Activated CD4-positive, alpha-beta memory T cell treated with anti-CD3 and anti-CD28 coated beads for 36 hours (primary cell): ENCODE measurements at regions of chr14 and their contacts with region 1.

Region 1: DNA sequence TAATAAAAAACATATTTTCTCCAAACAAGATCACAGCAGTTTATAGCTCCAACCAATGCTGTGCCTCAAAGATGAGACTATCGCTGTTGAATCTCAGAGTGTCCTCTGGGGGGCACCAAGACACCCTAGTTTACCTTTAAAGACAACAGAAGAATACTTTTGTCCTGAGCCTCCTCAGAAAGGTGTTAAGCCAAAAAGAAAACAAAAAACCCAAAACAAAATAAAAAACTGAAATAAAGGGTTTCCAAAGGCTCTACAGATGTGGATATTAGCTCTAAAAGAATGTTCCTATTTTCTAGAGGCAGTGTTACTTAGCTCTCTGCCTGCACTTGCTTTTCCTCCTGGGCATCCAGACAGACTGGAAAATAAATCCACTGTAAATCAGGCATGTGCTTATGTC is 86.9 kb upstream of the TTC7B start:
- DNase-seq: peak; percentile 63
- H3K4me3 Mint-ChIP-seq: no peak overlapping the region
- H3K27ac Mint-ChIP-seq: no peak overlapping the region
- H3K4me1 Mint-ChIP-seq: peaks cover 26% of the 10 kb centered on the region
- H3K27me3 Mint-ChIP-seq: no peaks in the 10 kb centered on the region

Region 2: GRCh38 chr14:90827916-90828610 is 75.0 kb before region 1 on chr14:
- CTCF ChIA-PET with region 1: no interaction called
- POLR2A ChIA-PET with region 1: no interaction called
- intact Hi-C with region 1: loop called (anchors 5 kb)
- DNase-seq: peak; percentile 96
- H3K4me3 Mint-ChIP-seq: peak overlapping the region; percentile 80
- H3K27ac Mint-ChIP-seq: peak overlapping the region; percentile 88
- H3K4me1 Mint-ChIP-seq: peaks cover 21% of the 10 kb centered on the region
- H3K27me3 Mint-ChIP-seq: no peaks in the 10 kb centered on the region

Region 3: GRCh38 chr14:91021991-91022621 is 119.0 kb after region 1 on chr14:
- CTCF ChIA-PET with region 1: interaction called, 5 read pairs
- POLR2A ChIA-PET with region 1: no interaction called
- intact Hi-C with region 1: loop called (anchors 5 kb)
- DNase-seq: no peak
- H3K4me3 Mint-ChIP-seq: peak overlapping the region; percentile 54
- H3K27ac Mint-ChIP-seq: peak overlapping the region; percentile 86
- H3K4me1 Mint-ChIP-seq: peaks cover 65% of the 10 kb centered on the region
- H3K27me3 Mint-ChIP-seq: no peaks in the 10 kb centered on the region

Region 4: DNA sequence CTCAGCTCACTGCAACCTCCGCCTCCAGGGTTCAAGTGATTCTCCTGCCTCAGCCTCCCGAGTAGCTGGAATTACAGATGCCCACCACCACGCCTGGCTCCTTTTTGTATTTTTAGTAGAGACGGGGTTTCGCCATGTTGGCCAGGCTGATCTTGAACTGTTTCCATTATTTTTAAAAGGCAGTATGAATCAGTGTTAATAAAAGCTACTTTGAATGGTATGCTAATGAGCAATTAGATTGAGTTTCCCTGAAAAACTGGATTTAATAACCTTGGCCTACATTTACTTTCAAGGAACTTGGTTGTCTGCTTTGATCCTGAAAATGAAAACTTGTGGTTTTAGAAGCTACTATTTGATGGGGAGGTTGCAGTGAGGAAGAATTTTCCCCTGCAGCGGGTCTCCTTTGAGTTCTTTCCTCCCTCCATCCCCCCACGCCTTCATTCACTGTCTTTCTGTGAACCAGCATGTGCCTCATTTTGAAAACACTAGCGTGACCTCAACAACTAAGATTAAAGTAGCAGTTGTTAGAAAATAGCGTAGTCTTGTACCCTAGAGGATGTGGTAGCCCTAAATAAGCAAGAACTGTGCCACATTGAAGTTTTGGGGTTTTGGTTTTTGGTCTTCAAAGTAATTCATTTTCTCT is 175.1 kb after region 1 on chr14:
- CTCF ChIA-PET with region 1: interaction called, 10 read pairs
- POLR2A ChIA-PET with region 1: no interaction called
- intact Hi-C with region 1: no loop called
- DNase-seq: peak; percentile 76
- H3K4me3 Mint-ChIP-seq: peak overlapping the region; percentile 13
- H3K27ac Mint-ChIP-seq: peak overlapping the region; percentile 87
- H3K4me1 Mint-ChIP-seq: peaks cover 30% of the 10 kb centered on the region
- H3K27me3 Mint-ChIP-seq: no peaks in the 10 kb centered on the region

Region 5: GRCh38 chr14:91114079-91115065 is 211.3 kb after region 1 on chr14:
- CTCF ChIA-PET with region 1: interaction called, 20 read pairs
- POLR2A ChIA-PET with region 1: interaction called, 4 read pairs
- intact Hi-C with region 1: loop called (anchors 2 kb)
- DNase-seq: peak; percentile 81
- H3K4me3 Mint-ChIP-seq: peak overlapping the region; percentile 83
- H3K27ac Mint-ChIP-seq: peak overlapping the region; percentile 94
- H3K4me1 Mint-ChIP-seq: peaks cover 66% of the 10 kb centered on the region
- H3K27me3 Mint-ChIP-seq: no peaks in the 10 kb centered on the region

Region 6: DNA sequence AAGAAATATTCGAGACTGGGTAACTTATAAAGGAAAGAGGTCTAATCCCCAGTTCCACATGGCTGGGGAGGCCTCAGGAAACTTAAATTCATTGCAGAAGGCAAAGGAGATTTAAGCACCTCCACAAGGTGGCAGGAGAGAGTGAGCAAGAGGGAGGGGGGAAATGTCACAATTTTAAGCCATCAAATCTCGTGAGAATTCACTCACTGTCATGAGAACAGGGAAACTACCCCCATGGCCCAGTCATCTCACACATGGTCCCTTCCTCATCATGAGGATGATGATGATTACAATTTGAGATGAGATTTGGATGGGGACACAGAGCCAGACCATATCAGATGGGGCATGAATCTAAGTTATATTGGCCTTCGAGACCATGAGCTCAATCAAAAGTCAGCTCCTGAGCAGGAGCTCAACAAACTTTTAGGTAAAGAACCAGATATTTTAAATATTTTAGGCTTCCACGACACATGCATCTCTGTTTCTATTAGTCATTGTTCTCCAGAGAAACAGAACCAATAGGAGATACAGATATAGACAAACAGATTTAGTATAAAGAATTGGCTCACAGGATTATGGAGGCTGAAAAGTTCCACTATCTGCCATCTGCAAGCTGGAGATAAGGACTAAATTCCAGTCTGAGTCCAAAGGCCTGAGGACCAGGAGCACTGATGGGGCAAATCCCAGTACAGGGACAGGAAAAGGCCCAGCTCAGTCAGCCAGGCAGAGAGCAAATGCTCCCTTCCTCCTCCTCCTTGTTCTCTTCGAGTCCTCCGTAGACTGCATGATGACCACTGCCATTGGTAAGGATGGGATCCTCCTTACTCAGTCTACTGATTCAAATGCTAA is 235.6 kb after region 1 on chr14:
- CTCF ChIA-PET with region 1: interaction called, 17 read pairs
- POLR2A ChIA-PET with region 1: no interaction called
- intact Hi-C with region 1: loop called (anchors 1 kb)
- DNase-seq: peak; percentile 74
- H3K4me3 Mint-ChIP-seq: no peak overlapping the region
- H3K27ac Mint-ChIP-seq: peak overlapping the region; percentile 77
- H3K4me1 Mint-ChIP-seq: peaks cover 51% of the 10 kb centered on the region
- H3K27me3 Mint-ChIP-seq: no peaks in the 10 kb centered on the region

Region 7: GRCh38 chr14:91193069-91193468 is 290.0 kb after region 1 on chr14:
- CTCF ChIA-PET with region 1: interaction called, 11 read pairs
- POLR2A ChIA-PET with region 1: no interaction called
- intact Hi-C with region 1: no loop called
- DNase-seq: no peak
- H3K4me3 Mint-ChIP-seq: no peak overlapping the region
- H3K27ac Mint-ChIP-seq: no peak overlapping the region
- H3K4me1 Mint-ChIP-seq: peaks cover 15% of the 10 kb centered on the region
- H3K27me3 Mint-ChIP-seq: no peaks in the 10 kb centered on the region